Sigmoid colon (tissue), 7 donors: ENCODE measurements at regions of chr2 and their contacts with region 1.

Region 1: GRCh38 chr2:177799531-177799930 is 273.0 kb downstream of the PDE11A start:
- DNase-seq: no peak
- H3K4me3 ChIP-seq: no peak overlapping the region
- H3K27ac ChIP-seq: no peak overlapping the region
- H3K4me1 ChIP-seq: peaks cover 0 to 26% (median 19%) of the 10 kb centered on the region in 4 donors
- H3K27me3 ChIP-seq: no peaks in the 10 kb centered on the region
- CTCF ChIP-seq: peak; percentile 24 to 57 (median 45)
- EP300 ChIP-seq: no peak
- POLR2A ChIP-seq: no peak

Region 2: DNA sequence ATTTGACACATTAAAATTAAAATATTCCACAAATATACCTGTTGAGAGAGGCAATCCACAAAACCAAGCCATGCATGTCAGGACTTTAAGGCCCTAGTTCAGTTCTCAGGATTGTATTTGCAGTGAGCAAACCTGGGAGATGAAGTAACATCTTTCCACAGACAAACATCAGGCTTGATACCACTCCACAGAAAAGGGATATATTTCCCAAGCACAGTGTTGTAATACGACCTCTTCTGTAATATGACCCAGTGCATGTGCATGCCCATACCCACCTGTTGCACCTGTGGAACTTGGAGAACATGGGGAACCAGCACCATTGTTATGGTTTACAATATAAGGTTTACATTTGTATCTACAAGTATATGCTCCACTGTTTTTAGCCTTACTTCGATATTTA is 89.0 kb after region 1 on chr2:
- intact Hi-C with region 1: loop called (anchors 5 kb)
- DNase-seq: no peak
- H3K4me3 ChIP-seq: no peak overlapping the region
- H3K27ac ChIP-seq: no peak overlapping the region
- H3K4me1 ChIP-seq: peaks cover under 1 to 35% (median 20%) of the 10 kb centered on the region in 4 donors
- H3K27me3 ChIP-seq: no peaks in the 10 kb centered on the region
- CTCF ChIP-seq: no peak
- EP300 ChIP-seq: no peak
- POLR2A ChIP-seq: no peak

Region 3: DNA sequence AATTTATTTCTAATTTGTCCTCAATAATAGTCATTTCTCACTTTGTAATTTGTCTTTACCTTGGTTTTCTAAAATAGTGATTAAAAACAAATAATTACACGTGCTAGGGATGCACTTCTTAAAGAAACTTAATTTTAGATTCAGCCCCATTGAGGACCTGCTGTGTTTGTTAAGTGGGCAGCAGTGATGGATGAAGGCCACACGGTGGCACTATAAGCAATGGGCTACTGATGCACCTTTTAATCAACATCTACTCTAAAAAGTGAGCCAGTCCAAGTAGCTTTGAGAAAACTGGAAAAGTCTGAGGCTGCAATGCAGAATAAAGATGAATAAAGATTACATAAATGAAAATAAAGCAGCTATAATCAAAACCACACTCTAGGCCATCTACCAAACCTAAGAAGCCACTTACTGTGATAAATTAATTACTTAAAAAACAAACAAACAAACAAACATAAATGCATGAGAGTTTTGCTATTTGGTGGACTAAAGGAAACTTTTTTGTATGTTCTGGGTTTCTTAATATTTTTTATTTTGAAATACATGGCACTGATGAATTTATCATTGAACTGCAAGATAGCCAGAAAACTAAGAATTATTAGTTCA is 183.8 kb after region 1 on chr2:
- intact Hi-C with region 1: loop called (anchors 5 kb)
- DNase-seq: no peak
- H3K4me3 ChIP-seq: no peak overlapping the region
- H3K27ac ChIP-seq: no peak overlapping the region
- H3K4me1 ChIP-seq: no peaks in the 10 kb centered on the region
- H3K27me3 ChIP-seq: no peaks in the 10 kb centered on the region
- CTCF ChIP-seq: peak in 3 of 4 experiments; percentile 33 to 59 (median 47)
- EP300 ChIP-seq: no peak
- POLR2A ChIP-seq: no peak

Region 4: GRCh38 chr2:178072383-178073301 is 273.1 kb after region 1 on chr2 and contains the start of gene PDE11A:
- intact Hi-C with region 1: loop called (anchors 5 kb)
- DNase-seq: peak; percentile 88
- H3K4me3 ChIP-seq: peak within 1 kb of the TSS; percentile 32 to 53 (median 47)
- H3K27ac ChIP-seq: peak within 1 kb of the TSS in 3 of 4 donors; percentile 34 to 62 (median 58)
- H3K4me1 ChIP-seq: peaks cover 0 to 16% (median 10%) of the 10 kb centered on the region in 4 donors
- H3K27me3 ChIP-seq: no peaks in the 10 kb centered on the region
- CTCF ChIP-seq: no peak
- EP300 ChIP-seq: no peak
- POLR2A ChIP-seq: peak in 1 of 2 donors; percentile 58
- total RNA-seq, gene PDE11A: 2.6 to 16.8 (median 5.0) TPM

Region 5: DNA sequence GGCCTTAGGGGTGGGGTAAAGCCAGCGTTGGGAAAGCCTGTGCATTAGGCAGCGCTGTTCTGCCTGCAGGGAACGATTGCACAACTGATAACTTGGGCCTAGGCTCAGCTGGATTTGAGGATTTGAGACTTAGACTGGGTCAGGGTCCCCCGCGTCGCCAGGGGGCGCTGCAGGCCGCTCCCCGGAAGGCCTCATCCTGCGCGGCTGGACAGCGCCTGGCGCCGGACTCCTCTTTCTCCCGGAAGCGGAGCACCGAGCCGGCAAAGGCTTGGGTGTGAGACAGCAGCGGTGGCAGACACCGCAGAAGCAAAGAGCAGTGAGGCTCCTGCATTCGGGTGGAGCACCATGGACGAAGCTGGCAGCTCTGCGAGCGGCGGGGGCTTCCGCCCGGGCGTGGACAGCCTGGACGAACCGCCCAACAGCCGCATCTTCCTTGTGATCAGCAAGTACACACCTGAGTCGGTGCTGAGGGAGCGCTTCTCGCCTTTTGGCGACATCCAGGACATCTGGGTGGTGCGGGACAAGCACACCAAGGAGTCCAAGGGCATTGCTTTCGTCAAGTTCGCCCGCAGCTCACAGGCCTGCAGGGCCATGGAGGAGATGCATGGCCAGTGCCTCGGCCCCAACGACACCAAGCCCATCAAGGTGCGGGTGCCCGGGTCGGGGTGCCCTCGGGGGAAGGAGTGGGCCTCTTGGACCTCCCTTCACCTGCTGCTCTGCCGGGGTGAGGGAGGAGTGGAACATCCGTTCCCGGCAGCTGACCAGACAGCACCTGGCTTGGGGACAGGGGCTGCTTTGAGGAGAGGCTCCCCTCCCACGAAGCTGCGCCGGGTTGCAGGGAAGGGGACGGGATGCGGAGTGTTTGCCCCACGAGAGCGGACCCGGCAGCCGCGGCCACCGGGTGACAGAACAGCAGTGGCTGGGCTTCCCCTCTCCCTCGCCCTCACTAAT is 312.9 kb after region 1 on chr2 and contains the start of gene RBM45:
- intact Hi-C with region 1: loop called (anchors 5 kb)
- DNase-seq: peak; percentile 95
- H3K4me3 ChIP-seq: peak within 1 kb of the TSS; percentile 73 to 89 (median 80)
- H3K27ac ChIP-seq: peak within 1 kb of the TSS; percentile 76 to 82 (median 80)
- H3K4me1 ChIP-seq: peaks cover 0 to 16% (median 13%) of the 10 kb centered on the region in 4 donors
- H3K27me3 ChIP-seq: no peaks in the 10 kb centered on the region
- CTCF ChIP-seq: peak; percentile 83 to 92 (median 88)
- EP300 ChIP-seq: no peak
- POLR2A ChIP-seq: peak in 1 of 2 donors; percentile 35
- total RNA-seq, gene RBM45: 11.0 to 16.3 (median 14.0) TPM